ENCODE measurements at regions of chr3 and their contacts with region 1.

Region 1: GRCh38 chr3:158140396-158140795 is 30.5 kb downstream of the RSRC1 start:
- DNase-seq: no peak
- ATAC-seq: no peak
- H3K4me3 ChIP-seq: no peak overlapping the region
- H3K4me3 Mint-ChIP-seq: no peak overlapping the region
- H3K27ac ChIP-seq: no peak overlapping the region
- H3K27ac Mint-ChIP-seq: no peak overlapping the region
- H3K4me1 ChIP-seq: no peaks in the 10 kb centered on the region
- H3K4me1 Mint-ChIP-seq: no peaks in the 10 kb centered on the region
- H3K27me3 ChIP-seq: no peaks in the 10 kb centered on the region
- H3K27me3 Mint-ChIP-seq: no peaks in the 10 kb centered on the region
- CTCF ChIP-seq: no peak

Region 2: DNA sequence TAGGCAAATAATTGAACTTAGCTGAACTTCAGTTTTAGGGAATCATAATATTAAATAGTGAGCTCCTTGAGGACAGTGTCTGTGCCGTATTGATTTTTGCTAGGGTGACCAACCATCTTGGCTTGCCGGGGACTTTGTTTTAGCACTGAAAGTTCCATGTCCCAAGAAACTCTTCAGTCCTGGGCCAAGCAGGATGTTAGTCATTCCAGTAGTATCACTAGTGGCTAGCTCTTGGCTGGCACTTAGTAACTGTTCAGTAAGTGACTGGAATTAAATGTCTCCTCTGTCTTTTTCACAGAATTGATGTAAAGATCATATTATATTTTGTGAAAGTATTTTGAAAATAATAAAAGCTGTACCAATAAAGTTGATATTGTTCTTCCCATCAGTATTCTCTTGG is 11.8 kb after region 1 on chr3:
- CTCF ChIA-PET with region 1: interaction called, 3 read pairs
- POLR2A ChIA-PET with region 1: no interaction called
- intact Hi-C with region 1: loop called in 1 of 2 experiments (anchors 2 kb)
- DNase-seq: no peak
- ATAC-seq: no peak
- H3K4me3 ChIP-seq: no peak overlapping the region
- H3K4me3 Mint-ChIP-seq: no peak overlapping the region
- H3K27ac ChIP-seq: no peak overlapping the region
- H3K27ac Mint-ChIP-seq: no peak overlapping the region
- H3K4me1 ChIP-seq: no peaks in the 10 kb centered on the region
- H3K4me1 Mint-ChIP-seq: peaks cover 12% of the 10 kb centered on the region
- H3K27me3 ChIP-seq: no peaks in the 10 kb centered on the region
- H3K27me3 Mint-ChIP-seq: no peaks in the 10 kb centered on the region
- CTCF ChIP-seq: no peak

Measured in CD8-positive, alpha-beta T cell (primary cell).